GM10248 (cell line): ENCODE measurements at regions of chr4 and their contacts with region 1.

Region 1: GRCh38 chr4:74189331-74190043 is 31.6 kb downstream of the MTHFD2L start:
- DNase-seq: peak; percentile 29
- CTCF ChIP-seq: peak; percentile 60

Region 2: DNA sequence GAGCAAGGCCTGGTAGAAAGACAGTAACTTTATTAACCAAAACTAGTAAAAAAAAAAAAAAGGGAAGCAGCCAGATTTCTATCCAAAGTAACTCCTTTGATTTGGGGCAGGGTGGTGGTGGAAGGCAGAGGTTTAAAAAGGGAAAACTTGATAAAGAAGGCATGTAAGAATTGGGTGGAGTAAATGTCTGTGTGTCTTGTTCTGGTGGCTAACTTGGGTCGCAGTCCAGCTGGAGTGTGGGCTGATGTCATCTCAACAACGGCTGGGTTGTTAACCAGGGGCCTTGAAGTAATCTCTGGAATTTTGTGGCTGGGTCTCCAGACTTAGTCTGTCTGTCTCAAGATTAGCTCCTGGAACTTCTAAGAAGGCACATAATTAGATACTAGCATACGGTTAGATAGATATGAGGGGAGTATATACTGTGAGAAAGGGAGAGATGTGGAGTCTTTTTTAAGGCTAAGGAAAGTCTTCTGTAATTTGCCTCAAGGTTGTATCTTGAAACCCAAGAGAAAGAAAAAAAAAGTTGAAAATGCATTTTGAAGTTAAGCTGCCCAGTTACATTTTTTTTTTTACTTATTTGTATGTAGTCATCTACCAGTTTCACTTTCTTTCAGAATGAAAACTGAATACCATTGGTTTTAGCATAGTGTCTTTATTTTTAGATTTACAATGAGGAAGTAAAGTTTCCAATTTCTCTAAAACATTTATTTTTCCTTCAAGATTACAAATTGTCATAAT is 16.8 kb after region 1 on chr4:
- CTCF ChIA-PET with region 1: interaction called, 11 read pairs
- POLR2A ChIA-PET with region 1: no interaction called
- DNase-seq: peak; percentile 30
- CTCF ChIP-seq: no peak

Region 3: DNA sequence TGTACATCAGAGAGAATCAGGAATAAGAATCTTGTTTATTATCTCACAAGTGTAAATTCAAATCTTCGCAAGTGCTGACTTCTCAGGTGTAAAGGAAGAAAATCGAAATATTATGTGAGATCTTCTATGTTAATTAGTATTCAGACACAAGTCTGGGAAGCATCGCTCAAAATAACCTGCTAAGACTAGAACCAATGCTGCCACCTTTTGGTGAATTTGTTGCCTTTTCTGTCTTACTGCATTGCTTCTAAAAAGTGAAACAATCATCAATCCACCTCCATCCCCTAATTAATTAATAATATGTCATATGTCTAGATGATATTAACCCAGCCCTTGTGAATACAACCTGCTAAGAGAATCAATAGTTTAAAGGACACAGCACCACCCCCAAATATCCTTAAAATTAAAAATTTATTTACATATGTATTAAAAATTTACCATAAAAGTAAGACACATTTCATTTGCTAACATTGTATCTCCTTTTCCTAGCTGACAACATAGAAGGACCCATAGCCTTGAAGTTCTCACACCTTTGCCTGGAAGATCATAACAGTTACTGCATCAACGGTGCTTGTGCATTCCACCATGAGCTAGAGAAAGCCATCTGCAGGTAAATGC is 122.3 kb after region 1 on chr4:
- CTCF ChIA-PET with region 1: interaction called, 23 read pairs
- POLR2A ChIA-PET with region 1: no interaction called
- DNase-seq: peak; percentile 19
- CTCF ChIP-seq: peak; percentile 73

Region 4: GRCh38 chr4:74376888-74377483 is 187.5 kb after region 1 on chr4:
- CTCF ChIA-PET with region 1: no interaction called
- POLR2A ChIA-PET with region 1: no interaction called
- DNase-seq: peak; percentile 41
- CTCF ChIP-seq: peak; percentile 41